ENCODE measurements at regions of chr7 and their contacts with region 1.

Region 1: GRCh38 chr7:64902806-64903721 is at the start of gene ZNF273:
- DNase-seq: peak; percentile 91 to 98 (median 94)
- ATAC-seq: peak; percentile 92
- H3K4me3 ChIP-seq: peak within 1 kb of the TSS; percentile 95
- H3K27ac ChIP-seq: peak within 1 kb of the TSS; percentile 92
- H3K4me1 ChIP-seq: peaks cover 15 to 28% of the 10 kb centered on the region in 2 experiments; a peak in 4 of 5 replicates
- H3K27me3 ChIP-seq: no peaks in the 10 kb centered on the region; a peak in 1 of 5 replicates
- CTCF ChIP-seq: 0 out of 6 replicates have a peak, but pooled peaks of 1 of the 3 experiments have one; percentile 4
- EP300 ChIP-seq: no peak; the same call in 1 of the 2 replicates
- POLR2A ChIP-seq: peak; percentile 95
- RAD21 ChIP-seq: no peak
- polyA plus RNA-seq, gene ZNF273: 20.2 to 37.0 TPM

Region 2: GRCh38 chr7:64636386-64636785 is 266.7 kb before region 1 on chr7:
- CTCF ChIA-PET with region 1: no interaction called
- POLR2A ChIA-PET with region 1: no interaction called
- in situ Hi-C with region 1: no loop called
- intact Hi-C with region 1: loop called (anchors 5 kb)
- DNase-seq: peak in 3 of 4 experiments; percentile 8 to 16 (median 12)
- ATAC-seq: no peak; the same call in 2 of the 3 replicates
- H3K4me3 ChIP-seq: no peak overlapping the region
- H3K27ac ChIP-seq: no peak overlapping the region
- H3K4me1 ChIP-seq: no peaks in the 10 kb centered on the region
- H3K27me3 ChIP-seq: no peaks in the 10 kb centered on the region
- CTCF ChIP-seq: peak; percentile 17 to 64 (median 47); a peak in 5 of 6 replicates
- EP300 ChIP-seq: no peak
- POLR2A ChIP-seq: no peak
- RAD21 ChIP-seq: peak in 1 of 2 experiments; percentile 27; a peak in 1 of 4 replicates

Region 3: DNA sequence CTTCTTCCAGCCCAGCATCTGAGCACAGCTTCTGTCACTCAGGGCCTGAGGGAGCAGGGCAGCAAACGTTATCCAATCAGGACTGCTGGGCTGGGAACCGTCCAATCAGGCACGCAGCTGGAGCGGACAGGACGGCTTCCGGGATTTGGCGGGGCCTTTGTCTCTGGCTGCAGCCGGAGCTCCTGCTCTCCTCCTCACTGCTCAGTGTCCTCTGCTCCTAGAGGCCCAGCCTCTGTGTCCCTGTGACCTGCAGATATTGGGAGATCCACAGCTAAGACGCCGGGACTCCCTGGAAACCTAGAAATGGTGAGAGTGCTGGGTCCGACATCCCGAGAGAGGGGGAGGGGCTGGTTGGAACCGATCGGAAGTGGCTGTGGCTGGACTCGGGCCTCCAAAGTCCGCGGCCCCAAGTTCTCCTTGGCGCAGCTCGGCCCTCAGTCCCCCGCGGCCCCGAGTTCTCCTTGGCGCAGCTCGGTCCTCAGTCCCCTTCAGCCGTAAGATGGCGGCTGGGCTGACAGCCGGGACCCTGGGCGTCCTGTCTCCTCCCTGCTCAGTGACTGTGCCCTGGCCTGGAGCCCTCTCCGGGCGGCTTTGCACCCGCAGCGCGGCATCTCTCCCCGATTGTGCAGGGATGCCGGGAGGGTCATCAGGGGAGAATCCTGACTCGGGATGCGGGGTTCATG is 236.9 kb before region 1 on chr7 and contains the start of gene ZNF107:
- CTCF ChIA-PET with region 1: no interaction called
- POLR2A ChIA-PET with region 1: interaction called, 7 read pairs
- in situ Hi-C with region 1: no loop called
- intact Hi-C with region 1: loop called (anchors 5 kb)
- DNase-seq: peak; percentile 93 to 97 (median 94)
- ATAC-seq: peak; percentile 99
- H3K4me3 ChIP-seq: peak within 1 kb of the TSS; percentile 97
- H3K27ac ChIP-seq: peak within 1 kb of the TSS; percentile 87
- H3K4me1 ChIP-seq: peaks cover 6 to 13% of the 10 kb centered on the region in 2 experiments
- H3K27me3 ChIP-seq: no peaks in the 10 kb centered on the region
- CTCF ChIP-seq: no peak
- EP300 ChIP-seq: no peak
- POLR2A ChIP-seq: peak; percentile 90
- RAD21 ChIP-seq: 0 out of 4 replicates have a peak, but pooled peaks of 1 of the 2 experiments have one; percentile 9
- polyA plus RNA-seq, gene ZNF107: 2.4 to 4.5 TPM

Region 4: GRCh38 chr7:64890761-64891362 is 12.2 kb before region 1 on chr7:
- CTCF ChIA-PET with region 1: no interaction called
- POLR2A ChIA-PET with region 1: interaction called, 18 read pairs
- in situ Hi-C with region 1: no loop called
- intact Hi-C with region 1: loop called (anchors 2 kb)
- DNase-seq: peak in 2 of 4 experiments; percentile 68 to 77
- ATAC-seq: peak; percentile 70
- H3K4me3 ChIP-seq: no peak overlapping the region
- H3K27ac ChIP-seq: peak overlapping the region; percentile 69
- H3K4me1 ChIP-seq: peaks cover 44 to 49% of the 10 kb centered on the region in 2 experiments; a peak in 4 of 5 replicates
- H3K27me3 ChIP-seq: no peaks in the 10 kb centered on the region
- CTCF ChIP-seq: no peak
- EP300 ChIP-seq: no peak
- POLR2A ChIP-seq: no peak
- RAD21 ChIP-seq: no peak

Region 5: DNA sequence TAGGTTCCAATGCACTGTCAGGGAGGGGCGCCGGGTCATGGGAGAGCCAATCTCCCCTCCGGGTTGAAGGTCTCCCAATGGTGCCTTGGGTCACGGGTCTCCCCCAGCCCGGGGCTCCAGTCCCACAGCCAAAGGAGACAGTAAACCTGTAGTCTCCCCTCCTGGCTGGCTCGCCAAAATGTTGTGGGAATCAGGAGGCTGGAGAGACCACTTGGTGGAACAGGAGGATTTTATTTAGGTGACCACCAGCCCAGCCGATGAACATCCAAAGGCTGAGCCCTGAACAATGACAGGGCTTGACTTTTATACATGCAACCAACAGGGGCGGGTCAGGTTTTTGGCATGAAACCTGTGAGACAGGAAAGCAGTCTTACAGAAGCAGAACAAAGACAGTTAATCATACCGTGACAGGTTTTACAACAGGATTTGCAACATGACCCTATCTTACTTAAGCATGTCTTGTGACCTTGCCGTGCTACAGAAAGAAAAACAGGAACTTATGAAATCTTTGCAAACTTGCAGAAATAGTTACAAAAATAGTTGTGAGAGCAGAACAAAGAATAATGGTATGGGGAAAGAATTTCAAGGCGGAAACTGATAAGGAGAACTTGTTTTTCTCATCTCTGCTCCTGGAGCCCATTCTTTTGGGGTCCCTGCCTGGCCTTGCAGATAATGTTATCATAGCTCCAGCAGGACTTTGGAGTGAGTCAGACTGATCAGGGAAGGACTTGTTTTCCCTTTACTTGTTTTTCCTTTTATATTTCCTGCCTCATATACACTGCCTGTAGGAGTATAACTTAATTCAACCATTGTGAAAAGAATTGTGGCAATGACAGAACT is 96.3 kb after region 1 on chr7:
- CTCF ChIA-PET with region 1: no interaction called
- POLR2A ChIA-PET with region 1: no interaction called
- in situ Hi-C with region 1: no loop called
- intact Hi-C with region 1: loop called (anchors 5 kb)
- DNase-seq: peak; percentile 71 to 96 (median 82)
- ATAC-seq: peak; percentile 80
- H3K4me3 ChIP-seq: peak overlapping the region; percentile 3; the same call in 1 of the 2 replicates
- H3K27ac ChIP-seq: peak overlapping the region; percentile 96
- H3K4me1 ChIP-seq: peaks cover 23 to 41% of the 10 kb centered on the region in 2 experiments; a peak in 4 of 5 replicates
- H3K27me3 ChIP-seq: no peaks in the 10 kb centered on the region
- CTCF ChIP-seq: no peak; a peak in 1 of 6 replicates
- EP300 ChIP-seq: peak; percentile 99
- POLR2A ChIP-seq: no peak
- RAD21 ChIP-seq: peak; percentile 41 to 45